ENCODE measurements at regions of chr5 and their contacts with region 1.

Region 1: DNA sequence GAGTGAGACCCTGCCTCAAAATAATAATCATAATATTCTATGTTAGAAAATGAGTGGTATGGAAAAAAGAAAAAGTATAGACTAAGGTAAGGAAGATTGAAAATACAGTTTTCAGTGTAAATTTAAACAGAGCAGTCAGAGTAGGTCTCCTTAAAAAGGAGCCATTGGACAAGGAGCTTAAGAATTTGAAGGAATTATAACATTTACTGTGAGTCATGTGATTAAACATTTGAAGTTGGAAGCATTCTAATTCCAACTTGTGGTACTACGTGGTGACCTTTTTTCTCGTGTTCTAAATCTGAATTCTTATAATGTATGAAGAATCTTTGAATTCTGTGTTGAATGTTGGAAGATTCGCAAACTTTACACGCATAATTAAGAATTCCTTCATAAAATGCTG is 39.3 kb upstream of the TMEM171 start:
- DNase-seq: no peak
- H3K4me3 ChIP-seq: no peak overlapping the region
- H3K27ac ChIP-seq: no peak overlapping the region
- H3K4me1 ChIP-seq: no peaks in the 10 kb centered on the region
- H3K27me3 ChIP-seq: no peaks in the 10 kb centered on the region
- CTCF ChIP-seq: no peak

Region 2: DNA sequence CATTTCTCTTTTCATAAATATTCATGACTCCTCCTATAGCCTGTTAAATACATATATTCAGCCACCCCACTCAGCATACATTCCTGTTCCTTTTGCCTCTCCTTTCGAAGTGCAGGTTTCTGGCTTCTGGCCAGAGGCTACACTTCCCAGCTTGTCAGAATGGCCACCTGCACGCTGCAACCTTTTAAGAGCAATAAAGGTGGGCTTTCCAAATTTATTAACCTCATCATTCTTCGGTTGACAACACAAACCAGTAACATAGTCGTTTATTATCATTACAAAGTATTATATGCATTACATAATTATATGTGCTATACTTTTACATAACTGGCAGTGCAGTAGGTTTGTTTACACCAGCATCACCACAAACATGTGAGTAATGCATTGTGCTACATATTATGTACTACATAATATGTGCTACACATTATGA is 22.8 kb after region 1 on chr5:
- CTCF ChIA-PET with region 1: no interaction called
- POLR2A ChIA-PET with region 1: no interaction called
- intact Hi-C with region 1: no loop called
- DNase-seq: no peak
- H3K4me3 ChIP-seq: no peak overlapping the region
- H3K27ac ChIP-seq: no peak overlapping the region
- H3K4me1 ChIP-seq: no peaks in the 10 kb centered on the region
- H3K27me3 ChIP-seq: no peaks in the 10 kb centered on the region
- CTCF ChIP-seq: no peak

Region 3: GRCh38 chr5:73201547-73202513 is 120.7 kb after region 1 on chr5:
- CTCF ChIA-PET with region 1: no interaction called
- POLR2A ChIA-PET with region 1: no interaction called
- intact Hi-C with region 1: loop called (anchors 5 kb)
- DNase-seq: peak; percentile 87
- H3K4me3 ChIP-seq: no peak overlapping the region
- H3K27ac ChIP-seq: no peak overlapping the region
- H3K4me1 ChIP-seq: no peaks in the 10 kb centered on the region
- H3K27me3 ChIP-seq: no peaks in the 10 kb centered on the region
- CTCF ChIP-seq: peak; percentile 92

Region 4: DNA sequence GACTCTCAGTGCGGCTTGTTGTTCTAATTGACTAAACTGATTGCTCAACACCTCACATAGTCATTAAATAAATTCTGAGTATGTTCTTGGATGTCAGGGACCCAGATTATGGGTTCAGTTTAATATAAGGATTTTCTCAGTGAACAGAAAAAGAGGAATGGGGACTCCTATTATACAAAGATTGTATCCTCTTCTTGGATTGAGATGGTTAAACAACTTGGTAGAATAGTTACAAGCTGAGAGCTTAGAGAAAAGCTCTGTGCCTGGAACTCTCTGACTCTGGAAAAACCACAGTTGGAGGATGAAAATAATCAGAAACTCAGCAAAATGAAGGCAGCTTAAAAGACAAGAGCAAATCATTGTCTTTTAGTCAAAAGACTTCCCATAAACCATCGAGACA is 453.9 kb after region 1 on chr5:
- CTCF ChIA-PET with region 1: no interaction called
- POLR2A ChIA-PET with region 1: no interaction called
- intact Hi-C with region 1: loop called (anchors 5 kb)
- DNase-seq: no peak
- H3K4me3 ChIP-seq: no peak overlapping the region
- H3K27ac ChIP-seq: no peak overlapping the region
- H3K4me1 ChIP-seq: no peaks in the 10 kb centered on the region
- H3K27me3 ChIP-seq: no peaks in the 10 kb centered on the region
- CTCF ChIP-seq: no peak

Region 5: DNA sequence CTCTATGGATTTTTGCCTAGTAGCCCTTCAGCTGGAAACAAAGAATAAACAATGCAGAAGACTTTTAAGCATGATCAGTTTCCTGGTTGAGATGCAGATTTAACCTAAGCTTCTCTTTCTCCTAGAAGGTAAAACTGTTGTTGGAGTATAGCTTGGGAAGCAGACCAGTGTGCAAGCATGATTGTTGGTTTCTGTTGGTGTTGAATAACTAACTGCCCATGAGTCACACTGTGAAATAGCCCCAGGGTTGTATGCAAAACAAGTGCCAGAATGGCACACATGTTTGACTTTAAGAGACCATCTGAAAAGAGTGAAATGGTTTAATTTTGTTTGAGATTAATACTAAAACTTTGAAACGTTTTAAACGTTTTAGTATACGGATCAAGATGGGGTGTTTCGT is 772.0 kb after region 1 on chr5:
- CTCF ChIA-PET with region 1: no interaction called
- POLR2A ChIA-PET with region 1: no interaction called
- intact Hi-C with region 1: no loop called
- DNase-seq: peak; percentile 8
- H3K4me3 ChIP-seq: no peak overlapping the region
- H3K27ac ChIP-seq: no peak overlapping the region
- H3K4me1 ChIP-seq: no peaks in the 10 kb centered on the region
- H3K27me3 ChIP-seq: no peaks in the 10 kb centered on the region
- CTCF ChIP-seq: no peak

Measured in A673 (cell line).